ENCODE measurements at regions of chr4 and their contacts with region 1.

Region 1: DNA sequence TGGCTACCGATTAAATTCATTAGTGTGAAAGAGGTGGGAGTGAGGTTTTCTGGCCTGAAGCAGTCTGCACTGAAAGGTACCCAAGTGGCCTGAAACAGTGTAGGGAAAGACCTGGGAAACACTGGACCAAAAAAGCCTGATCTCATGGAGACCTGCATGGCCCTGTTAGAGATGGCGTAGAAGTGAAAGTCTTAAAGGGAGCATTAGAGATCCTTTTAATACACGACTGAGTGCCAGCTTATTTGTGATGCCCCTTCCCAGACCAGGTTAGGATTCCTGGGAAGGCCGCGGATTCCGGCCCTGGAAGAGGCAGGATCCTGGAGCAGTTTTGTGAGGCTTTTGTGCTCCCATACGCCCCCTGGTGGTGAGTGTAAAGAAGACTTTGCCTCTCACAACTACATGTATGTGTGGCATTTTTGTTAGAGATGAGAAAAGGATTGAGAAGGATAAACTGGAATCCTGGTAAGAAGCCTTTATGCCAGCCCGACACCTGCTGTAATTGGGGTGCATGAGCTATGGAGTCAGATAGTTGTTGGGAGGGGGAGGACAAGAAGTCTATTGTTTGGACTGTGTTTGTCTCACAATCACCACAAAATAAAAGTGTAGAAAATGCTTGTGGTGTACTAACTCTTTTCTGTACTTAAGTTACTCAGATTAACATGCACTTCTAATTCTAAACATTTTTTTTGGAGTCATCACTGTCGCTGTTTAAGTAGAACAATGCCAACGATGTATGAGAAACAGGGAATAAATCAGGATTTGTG is 54.0 kb downstream of the JADE1 start:
- DNase-seq: peak; percentile 50
- H3K4me3 ChIP-seq: no peak overlapping the region
- H3K27ac ChIP-seq: no peak overlapping the region
- H3K4me1 ChIP-seq: peaks cover 4% of the 10 kb centered on the region
- H3K27me3 ChIP-seq: no peaks in the 10 kb centered on the region
- CTCF ChIP-seq: peak; percentile 75 to 84

Region 2: GRCh38 chr4:128191115-128191781 is 672.2 kb before region 1 on chr4:
- CTCF ChIA-PET with region 1: no interaction called
- dilution Hi-C with region 1: no loop called
- in situ Hi-C with region 1: no loop called
- intact Hi-C with region 1: loop called (anchors 1 kb)
- DNase-seq: peak; percentile 55
- H3K4me3 ChIP-seq: no peak overlapping the region
- H3K27ac ChIP-seq: no peak overlapping the region
- H3K4me1 ChIP-seq: no peaks in the 10 kb centered on the region
- H3K27me3 ChIP-seq: no peaks in the 10 kb centered on the region
- CTCF ChIP-seq: peak; percentile 86 to 91

Region 3: DNA sequence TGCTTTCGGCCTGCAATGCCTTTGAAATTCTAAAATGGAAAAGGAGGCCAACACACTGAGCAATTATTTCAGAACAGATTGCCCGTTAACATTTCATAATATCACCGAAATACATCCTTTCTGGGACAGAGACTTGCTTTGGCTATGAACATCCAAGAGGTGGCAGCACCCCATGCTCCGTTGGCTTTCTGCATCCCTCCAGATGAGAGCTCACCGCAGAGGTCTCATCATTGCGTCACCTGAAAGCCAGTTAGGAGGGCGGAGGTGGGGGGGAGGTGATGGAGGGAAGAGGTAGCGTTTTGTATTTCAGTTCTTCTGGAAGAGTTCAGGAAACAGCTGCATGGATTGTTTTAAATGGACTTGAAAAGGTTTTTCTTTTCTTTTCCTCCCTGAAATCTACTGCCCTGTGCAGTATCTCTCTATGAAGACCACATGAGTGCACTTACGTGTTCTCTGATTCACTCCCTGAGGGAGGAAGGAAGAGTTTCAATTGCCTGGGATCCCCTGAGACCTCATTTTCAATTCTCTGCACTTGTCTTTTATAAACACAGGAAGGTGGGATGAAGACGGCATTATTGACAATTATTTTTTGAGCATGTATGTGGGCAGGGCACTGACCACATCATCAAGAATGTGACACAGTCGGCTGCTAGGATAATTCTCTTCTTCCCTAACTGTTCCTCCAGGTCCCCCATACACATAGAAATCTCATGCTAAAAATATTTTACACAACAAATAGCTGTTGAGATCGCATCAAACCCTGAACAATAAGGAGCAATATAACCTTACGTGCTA is 409.0 kb before region 1 on chr4:
- CTCF ChIA-PET with region 1: no interaction called
- dilution Hi-C with region 1: no loop called
- in situ Hi-C with region 1: no loop called
- intact Hi-C with region 1: loop called (anchors 1 kb)
- DNase-seq: peak; percentile 83
- H3K4me3 ChIP-seq: no peak overlapping the region
- H3K27ac ChIP-seq: no peak overlapping the region
- H3K4me1 ChIP-seq: peaks cover 14% of the 10 kb centered on the region
- H3K27me3 ChIP-seq: no peaks in the 10 kb centered on the region
- CTCF ChIP-seq: peak; percentile 88 to 93

Region 4: DNA sequence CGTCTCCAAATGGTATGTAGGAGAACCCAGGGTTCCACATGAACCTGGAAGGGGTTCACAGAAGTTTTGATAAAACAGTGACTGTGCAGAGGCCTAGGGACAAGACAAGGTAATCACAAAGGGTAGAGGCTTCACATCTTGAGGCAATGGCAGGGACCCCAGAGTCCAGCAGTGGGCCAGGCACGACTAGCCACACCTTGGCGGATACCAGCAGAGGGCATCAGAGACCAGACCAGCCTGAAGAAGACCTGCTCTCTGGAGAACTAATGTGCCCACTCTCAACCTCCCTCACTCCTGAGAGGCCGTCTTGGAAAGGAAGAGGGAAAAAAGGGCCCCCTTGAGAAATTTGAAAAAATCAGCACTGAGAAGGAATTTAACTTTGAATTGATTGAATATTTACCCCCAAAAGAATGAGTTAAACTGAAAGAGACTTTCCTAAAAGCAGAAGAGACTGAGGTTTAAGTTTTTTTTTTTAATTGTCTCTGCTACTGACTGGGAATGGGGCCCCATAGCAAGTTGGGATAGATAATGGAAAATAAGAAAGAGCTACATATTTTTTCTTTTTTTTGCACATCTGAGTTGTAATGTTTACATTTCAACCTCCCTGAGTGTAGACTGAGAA is 297.8 kb before region 1 on chr4:
- CTCF ChIA-PET with region 1: no interaction called
- dilution Hi-C with region 1: no loop called
- in situ Hi-C with region 1: loop called in 1 of 2 experiments (anchors 10 kb)
- intact Hi-C with region 1: loop called (anchors 1 kb)
- DNase-seq: no peak
- H3K4me3 ChIP-seq: no peak overlapping the region
- H3K27ac ChIP-seq: no peak overlapping the region
- H3K4me1 ChIP-seq: peaks cover 6% of the 10 kb centered on the region
- H3K27me3 ChIP-seq: no peaks in the 10 kb centered on the region
- CTCF ChIP-seq: peak; percentile 37 to 70

Region 5: GRCh38 chr4:128574706-128575105 is 288.8 kb before region 1 on chr4:
- CTCF ChIA-PET with region 1: no interaction called
- dilution Hi-C with region 1: no loop called
- in situ Hi-C with region 1: loop called in 1 of 2 experiments (anchors 10 kb)
- intact Hi-C with region 1: loop called (anchors 1 kb)
- DNase-seq: peak; percentile 47
- H3K4me3 ChIP-seq: no peak overlapping the region
- H3K27ac ChIP-seq: no peak overlapping the region
- H3K4me1 ChIP-seq: peaks cover 30% of the 10 kb centered on the region
- H3K27me3 ChIP-seq: no peaks in the 10 kb centered on the region
- CTCF ChIP-seq: peak; percentile 64 to 79

Region 6: DNA sequence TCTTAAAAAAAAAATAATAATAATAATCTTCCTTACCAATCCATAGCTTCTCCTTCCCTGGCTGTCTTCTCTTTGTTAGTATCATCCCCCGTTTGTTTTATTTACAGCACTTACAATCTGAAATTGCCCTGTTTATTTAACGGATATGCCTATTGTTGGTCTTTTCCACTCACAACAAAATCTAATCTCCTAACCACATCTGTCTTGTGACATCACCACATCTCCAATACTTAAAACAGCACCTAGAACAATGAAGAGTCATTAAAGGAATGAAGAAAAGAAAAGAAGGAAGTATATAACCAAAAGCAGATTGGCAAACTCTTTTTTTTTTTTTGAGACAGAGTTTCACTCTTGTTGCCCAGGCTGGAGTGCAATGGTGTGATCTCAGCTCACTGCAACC is 92.7 kb before region 1 on chr4:
- CTCF ChIA-PET with region 1: no interaction called
- dilution Hi-C with region 1: no loop called
- in situ Hi-C with region 1: no loop called
- intact Hi-C with region 1: no loop called
- DNase-seq: no peak
- H3K4me3 ChIP-seq: no peak overlapping the region
- H3K27ac ChIP-seq: no peak overlapping the region
- H3K4me1 ChIP-seq: no peaks in the 10 kb centered on the region
- H3K27me3 ChIP-seq: no peaks in the 10 kb centered on the region
- CTCF ChIP-seq: no peak

Region 7: GRCh38 chr4:128782076-128782715 is 81.3 kb before region 1 on chr4:
- CTCF ChIA-PET with region 1: no interaction called
- dilution Hi-C with region 1: no loop called
- in situ Hi-C with region 1: no loop called
- intact Hi-C with region 1: loop called (anchors 1 kb)
- DNase-seq: no peak
- H3K4me3 ChIP-seq: no peak overlapping the region
- H3K27ac ChIP-seq: no peak overlapping the region
- H3K4me1 ChIP-seq: no peaks in the 10 kb centered on the region
- H3K27me3 ChIP-seq: no peaks in the 10 kb centered on the region
- CTCF ChIP-seq: peak in 1 of 2 donors; percentile 12

Measured in mammary epithelial cell (primary cell).